IMR-90 (cell line): ENCODE measurements at regions of chr12 and their contacts with region 1.

Region 1: GRCh38 chr12:55738123-55739024 is 4.5 kb upstream of the GDF11 start:
- DNase-seq: peak; percentile 82
- ATAC-seq: peak; percentile 75
- H3K4me3 ChIP-seq: peak overlapping the region; percentile 68
- H3K27ac ChIP-seq: peak overlapping the region; percentile 47
- H3K4me1 ChIP-seq: peaks cover 6% of the 10 kb centered on the region
- H3K27me3 ChIP-seq: no peaks in the 10 kb centered on the region
- CTCF ChIP-seq: peak; percentile 93
- POLR2A ChIP-seq: no peak
- RAD21 ChIP-seq: peak; percentile 89

Region 2: GRCh38 chr12:53917126-53917653 is 1821.2 kb before region 1 on chr12:
- CTCF ChIA-PET with region 1: no interaction called
- POLR2A ChIA-PET with region 1: no interaction called
- dilution Hi-C with region 1: no loop called
- in situ Hi-C with region 1: no loop called
- intact Hi-C with region 1: no loop called
- DNase-seq: no peak
- ATAC-seq: no peak
- H3K4me3 ChIP-seq: no peak overlapping the region
- H3K27ac ChIP-seq: no peak overlapping the region
- H3K4me1 ChIP-seq: no peaks in the 10 kb centered on the region
- H3K27me3 ChIP-seq: peaks cover 5% of the 10 kb centered on the region
- CTCF ChIP-seq: no peak
- POLR2A ChIP-seq: no peak
- RAD21 ChIP-seq: no peak

Region 3: DNA sequence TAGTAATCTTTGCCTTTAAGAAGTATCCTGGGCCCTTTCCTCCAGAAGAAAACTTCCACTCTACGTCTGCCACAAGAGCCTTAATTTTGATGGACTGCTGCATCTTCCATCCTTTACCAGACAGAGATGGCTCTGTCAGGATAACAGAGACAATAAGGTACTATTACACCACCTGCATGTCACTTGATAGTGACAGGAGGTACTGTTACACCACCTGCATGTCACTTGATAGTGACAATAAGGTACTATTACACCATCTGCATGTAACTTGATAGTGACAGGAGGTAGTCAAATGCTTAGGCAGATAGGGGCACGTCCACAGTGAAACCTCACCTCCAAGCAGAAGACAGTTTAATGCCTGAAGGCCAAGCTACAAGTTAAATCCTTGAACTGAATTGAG is 480.1 kb before region 1 on chr12:
- CTCF ChIA-PET with region 1: no interaction called
- POLR2A ChIA-PET with region 1: no interaction called
- dilution Hi-C with region 1: no loop called
- in situ Hi-C with region 1: no loop called
- intact Hi-C with region 1: no loop called
- DNase-seq: no peak
- ATAC-seq: no peak
- H3K4me3 ChIP-seq: no peak overlapping the region
- H3K27ac ChIP-seq: no peak overlapping the region
- H3K4me1 ChIP-seq: no peaks in the 10 kb centered on the region
- H3K27me3 ChIP-seq: no peaks in the 10 kb centered on the region
- CTCF ChIP-seq: no peak
- POLR2A ChIP-seq: no peak
- RAD21 ChIP-seq: no peak

Region 4: GRCh38 chr12:55659486-55660385 is 78.6 kb before region 1 on chr12:
- CTCF ChIA-PET with region 1: interaction called, 6 read pairs
- POLR2A ChIA-PET with region 1: no interaction called
- dilution Hi-C with region 1: no loop called
- in situ Hi-C with region 1: no loop called
- intact Hi-C with region 1: loop called (anchors 1 kb)
- DNase-seq: peak; percentile 9
- ATAC-seq: peak; percentile 73
- H3K4me3 ChIP-seq: no peak overlapping the region
- H3K27ac ChIP-seq: no peak overlapping the region
- H3K4me1 ChIP-seq: no peaks in the 10 kb centered on the region
- H3K27me3 ChIP-seq: peaks cover 26% of the 10 kb centered on the region
- CTCF ChIP-seq: peak; percentile 53
- POLR2A ChIP-seq: no peak
- RAD21 ChIP-seq: peak; percentile 68

Region 5: GRCh38 chr12:55797068-55797467 is 58.7 kb after region 1 on chr12:
- CTCF ChIA-PET with region 1: interaction called, 7 read pairs
- POLR2A ChIA-PET with region 1: no interaction called
- dilution Hi-C with region 1: no loop called
- in situ Hi-C with region 1: no loop called
- intact Hi-C with region 1: loop called (anchors 1 kb)
- DNase-seq: peak; percentile 56
- ATAC-seq: peak; percentile 76
- H3K4me3 ChIP-seq: no peak overlapping the region
- H3K27ac ChIP-seq: no peak overlapping the region
- H3K4me1 ChIP-seq: no peaks in the 10 kb centered on the region; the same call in 1 of the 2 replicates
- H3K27me3 ChIP-seq: no peaks in the 10 kb centered on the region
- CTCF ChIP-seq: peak; percentile 58
- POLR2A ChIP-seq: no peak
- RAD21 ChIP-seq: peak; percentile 63

Region 6: GRCh38 chr12:55926738-55927587 is 188.6 kb after region 1 on chr12:
- CTCF ChIA-PET with region 1: interaction called, 5 read pairs
- POLR2A ChIA-PET with region 1: no interaction called
- dilution Hi-C with region 1: no loop called
- in situ Hi-C with region 1: no loop called
- intact Hi-C with region 1: loop called (anchors 5 kb)
- DNase-seq: peak; percentile 91
- ATAC-seq: peak; percentile 70
- H3K4me3 ChIP-seq: peak overlapping the region; percentile 83
- H3K27ac ChIP-seq: peak overlapping the region; percentile 94
- H3K4me1 ChIP-seq: peaks cover 13% of the 10 kb centered on the region
- H3K27me3 ChIP-seq: no peaks in the 10 kb centered on the region
- CTCF ChIP-seq: peak; percentile 64
- POLR2A ChIP-seq: peak; percentile 84
- RAD21 ChIP-seq: no peak; the same call in 1 of the 2 replicates

Region 7: GRCh38 chr12:55973598-55974307 is 235.4 kb after region 1 on chr12 and contains the start of gene RAB5B:
- CTCF ChIA-PET with region 1: interaction called, 3 read pairs
- POLR2A ChIA-PET with region 1: interaction called, 4 read pairs
- dilution Hi-C with region 1: no loop called
- in situ Hi-C with region 1: no loop called
- intact Hi-C with region 1: loop called (anchors 1 kb)
- DNase-seq: peak; percentile 100
- ATAC-seq: peak; percentile 89
- H3K4me3 ChIP-seq: peak within 1 kb of the TSS; percentile 70
- H3K27ac ChIP-seq: peak within 1 kb of the TSS; percentile 64
- H3K4me1 ChIP-seq: peaks cover 5% of the 10 kb centered on the region
- H3K27me3 ChIP-seq: no peaks in the 10 kb centered on the region
- CTCF ChIP-seq: no peak
- POLR2A ChIP-seq: peak; percentile 93
- RAD21 ChIP-seq: no peak
- total RNA-seq, gene RAB5B: 54.4 and 56.5 TPM in 2 replicates

Region 8: DNA sequence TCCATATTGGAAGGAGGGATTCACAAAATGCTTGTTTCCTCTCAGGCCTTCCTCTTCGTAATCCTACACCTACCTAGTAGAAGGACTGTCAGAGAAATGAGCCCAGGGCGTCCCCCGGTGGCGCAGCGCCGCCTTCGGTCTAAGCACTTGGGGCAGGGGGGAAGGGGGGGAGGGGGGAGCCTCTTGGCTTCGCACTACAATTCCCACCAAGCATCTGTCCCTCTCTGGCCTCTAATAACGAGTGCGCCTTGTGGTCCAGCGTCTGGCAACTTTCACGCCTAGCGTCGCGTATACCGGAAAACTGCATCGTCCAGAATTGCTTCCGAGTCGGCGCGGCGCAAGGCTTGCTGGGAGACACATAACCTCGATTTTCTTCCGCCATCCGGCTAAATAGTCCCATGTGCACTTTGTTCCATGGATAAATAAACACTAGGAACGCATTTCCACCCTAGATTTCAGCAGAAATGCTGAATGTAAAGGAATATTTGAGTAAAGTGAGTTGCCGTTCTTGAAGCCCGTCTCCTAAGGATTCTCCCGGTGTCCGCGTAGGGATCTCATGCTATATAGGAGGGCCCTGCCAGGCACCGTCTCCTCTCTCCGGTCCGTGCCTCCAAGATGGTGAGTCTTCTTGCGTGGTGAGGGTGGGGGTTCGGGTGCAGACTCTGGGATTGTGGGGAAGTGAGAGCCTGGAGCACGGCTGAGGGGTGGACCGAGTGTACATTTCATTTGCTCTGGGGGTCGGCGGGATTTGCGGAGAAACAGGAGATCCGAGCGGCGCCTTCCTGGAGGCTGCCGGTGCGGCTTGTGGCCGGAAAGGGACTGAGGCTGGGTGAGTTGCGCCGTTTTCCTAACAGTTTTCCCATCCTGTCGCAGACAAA is 303.4 kb after region 1 on chr12 and contains the start of gene RPS26:
- CTCF ChIA-PET with region 1: interaction called, 5 read pairs
- POLR2A ChIA-PET with region 1: no interaction called
- dilution Hi-C with region 1: no loop called
- in situ Hi-C with region 1: no loop called
- intact Hi-C with region 1: loop called (anchors 5 kb)
- DNase-seq: peak; percentile 100
- ATAC-seq: peak; percentile 88
- H3K4me3 ChIP-seq: peak within 1 kb of the TSS; percentile 93
- H3K27ac ChIP-seq: peak within 1 kb of the TSS; percentile 90
- H3K4me1 ChIP-seq: no peaks in the 10 kb centered on the region; the same call in 1 of the 2 replicates
- H3K27me3 ChIP-seq: no peaks in the 10 kb centered on the region
- CTCF ChIP-seq: peak; percentile 53
- POLR2A ChIP-seq: peak; percentile 99
- RAD21 ChIP-seq: peak; percentile 65
- total RNA-seq, gene RPS26: 307 and 977 TPM in 2 replicates